Naive thymus-derived CD4-positive, alpha-beta T cell (primary cell): ENCODE measurements at regions of chr19 and their contacts with region 1.

Region 1: DNA sequence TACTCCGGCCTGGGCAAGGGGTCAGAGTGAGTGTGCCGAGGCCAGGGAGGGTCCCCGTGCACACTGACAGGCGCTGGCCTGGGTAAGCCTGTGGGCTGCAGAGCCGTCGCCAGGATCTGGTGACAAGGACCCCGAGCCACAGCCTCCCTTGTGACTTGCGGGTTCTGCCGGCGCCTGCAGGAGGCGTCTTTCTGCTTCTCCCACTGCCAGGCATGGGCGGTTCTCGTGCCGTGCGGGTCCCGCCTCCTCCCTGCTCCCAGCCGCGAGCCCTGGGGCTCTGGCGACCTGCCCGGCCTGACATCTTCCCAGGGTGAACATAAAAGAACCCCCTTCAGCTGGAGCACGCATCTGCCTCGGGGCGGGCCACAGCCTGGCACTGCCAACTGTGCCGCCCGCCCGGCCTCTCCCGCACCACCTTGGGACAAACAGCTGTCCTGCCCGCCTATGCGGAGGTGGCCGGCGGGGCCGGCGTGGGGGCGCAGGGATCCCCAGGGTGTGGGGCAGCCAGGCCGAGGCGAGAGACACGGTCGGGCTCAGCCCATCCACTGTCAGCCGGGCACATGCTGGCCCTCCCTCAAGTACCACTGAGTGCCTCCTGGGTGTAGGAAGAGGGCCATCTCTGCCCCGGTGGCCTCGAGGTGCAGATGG is 1.5 kb upstream of the HCN2 start:
- DNase-seq: peak; percentile 35 to 72 (median 57)
- ATAC-seq: peak; percentile 66
- H3K4me3 ChIP-seq: no peak overlapping the region
- H3K4me3 Mint-ChIP-seq: peak overlapping the region in 8 of 10 donors; percentile 28 to 76 (median 48)
- H3K27ac ChIP-seq: no peak overlapping the region
- H3K27ac Mint-ChIP-seq: no peak overlapping the region
- H3K4me1 ChIP-seq: peaks cover 10 to 12% of the 10 kb centered on the region in 2 donors
- H3K4me1 Mint-ChIP-seq: peaks cover 0 to 11% (median 4%) of the 10 kb centered on the region in 7 donors
- H3K27me3 ChIP-seq: peaks cover 0 to 10% of the 10 kb centered on the region in 2 donors
- H3K27me3 Mint-ChIP-seq: peaks cover 0 to 31% (median 8%) of the 10 kb centered on the region in 5 donors

Region 2: DNA sequence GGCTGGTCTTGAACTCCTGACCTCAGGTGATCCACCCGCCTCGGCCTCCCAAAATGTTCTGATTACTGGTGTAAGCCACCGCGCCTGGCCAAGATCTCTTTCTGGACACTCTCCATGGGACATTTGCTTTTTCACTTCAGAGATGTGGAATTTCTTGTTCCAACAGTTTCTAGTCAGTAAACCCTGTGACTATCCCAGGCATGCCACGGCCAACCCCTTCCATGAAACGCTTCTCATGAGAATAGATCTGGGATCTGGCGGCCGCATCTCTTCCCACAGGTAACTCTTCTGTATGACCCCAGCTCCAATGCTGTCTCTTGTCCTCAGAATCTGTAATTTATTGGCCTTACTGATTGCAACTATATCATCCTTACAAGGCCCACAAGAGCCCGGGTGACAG is 313.2 kb before region 1 on chr19:
- CTCF ChIA-PET with region 1: no interaction called
- POLR2A ChIA-PET with region 1: no interaction called
- intact Hi-C with region 1: no loop called
- DNase-seq: no peak
- ATAC-seq: no peak
- H3K4me3 ChIP-seq: no peak overlapping the region
- H3K4me3 Mint-ChIP-seq: no peak overlapping the region
- H3K27ac ChIP-seq: no peak overlapping the region
- H3K27ac Mint-ChIP-seq: no peak overlapping the region
- H3K4me1 ChIP-seq: no peaks in the 10 kb centered on the region
- H3K4me1 Mint-ChIP-seq: no peaks in the 10 kb centered on the region
- H3K27me3 ChIP-seq: peaks cover 0 to 5% of the 10 kb centered on the region in 2 donors
- H3K27me3 Mint-ChIP-seq: peaks cover 26 to 56% (median 44%) of the 10 kb centered on the region in 5 donors

Region 3: DNA sequence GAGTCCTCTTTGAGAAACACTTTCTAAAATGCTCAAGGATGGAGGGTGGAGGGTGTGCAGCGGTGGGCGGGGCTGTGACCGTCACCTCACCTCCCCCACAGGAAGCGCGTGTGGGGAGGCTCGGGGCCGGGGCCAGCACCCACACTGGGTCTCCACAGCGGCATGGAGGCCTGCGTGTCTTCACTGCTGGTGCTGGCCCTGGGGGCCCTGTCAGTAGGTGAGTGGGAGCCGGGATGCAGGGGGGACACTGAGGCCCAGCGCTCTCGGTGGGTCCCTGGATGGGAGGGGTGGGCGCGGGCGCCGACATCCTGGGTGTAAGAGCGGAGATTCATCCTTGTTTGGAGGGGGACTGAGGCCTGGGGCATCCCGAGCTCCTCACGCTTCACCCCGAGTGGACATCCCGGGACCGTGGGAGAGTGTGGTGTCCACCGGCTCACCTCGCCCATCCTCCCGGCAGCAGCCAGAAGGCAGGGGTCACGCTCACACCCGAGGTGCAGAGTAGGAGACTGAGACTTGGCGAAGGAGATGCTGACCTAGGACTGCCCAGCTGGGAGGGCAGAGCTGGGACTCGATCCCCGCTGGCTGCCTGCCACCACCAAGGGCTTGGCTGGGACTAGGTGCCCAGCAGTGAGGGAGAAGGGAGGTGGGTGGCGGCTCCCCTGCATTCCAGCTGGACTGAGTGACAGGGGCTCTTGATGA is 44.2 kb before region 1 on chr19 and contains the start of gene GZMM:
- CTCF ChIA-PET with region 1: no interaction called
- POLR2A ChIA-PET with region 1: no interaction called
- intact Hi-C with region 1: no loop called
- DNase-seq: peak; percentile 63 to 86 (median 82)
- ATAC-seq: peak; percentile 98
- H3K4me3 ChIP-seq: peak within 1 kb of the TSS; percentile 70
- H3K4me3 Mint-ChIP-seq: peak within 1 kb of the TSS; percentile 81 to 94 (median 90)
- H3K27ac ChIP-seq: peak within 1 kb of the TSS; percentile 88
- H3K27ac Mint-ChIP-seq: peak within 1 kb of the TSS; percentile 77 to 97 (median 91)
- H3K4me1 ChIP-seq: peaks cover 5 to 10% of the 10 kb centered on the region in 2 donors
- H3K4me1 Mint-ChIP-seq: peaks cover 4 to 24% (median 21%) of the 10 kb centered on the region in 7 donors
- H3K27me3 ChIP-seq: no peaks in the 10 kb centered on the region
- H3K27me3 Mint-ChIP-seq: no peaks in the 10 kb centered on the region
- total RNA-seq, gene GZMM: 30.0 to 81.4 (median 67.8) TPM

Region 4: DNA sequence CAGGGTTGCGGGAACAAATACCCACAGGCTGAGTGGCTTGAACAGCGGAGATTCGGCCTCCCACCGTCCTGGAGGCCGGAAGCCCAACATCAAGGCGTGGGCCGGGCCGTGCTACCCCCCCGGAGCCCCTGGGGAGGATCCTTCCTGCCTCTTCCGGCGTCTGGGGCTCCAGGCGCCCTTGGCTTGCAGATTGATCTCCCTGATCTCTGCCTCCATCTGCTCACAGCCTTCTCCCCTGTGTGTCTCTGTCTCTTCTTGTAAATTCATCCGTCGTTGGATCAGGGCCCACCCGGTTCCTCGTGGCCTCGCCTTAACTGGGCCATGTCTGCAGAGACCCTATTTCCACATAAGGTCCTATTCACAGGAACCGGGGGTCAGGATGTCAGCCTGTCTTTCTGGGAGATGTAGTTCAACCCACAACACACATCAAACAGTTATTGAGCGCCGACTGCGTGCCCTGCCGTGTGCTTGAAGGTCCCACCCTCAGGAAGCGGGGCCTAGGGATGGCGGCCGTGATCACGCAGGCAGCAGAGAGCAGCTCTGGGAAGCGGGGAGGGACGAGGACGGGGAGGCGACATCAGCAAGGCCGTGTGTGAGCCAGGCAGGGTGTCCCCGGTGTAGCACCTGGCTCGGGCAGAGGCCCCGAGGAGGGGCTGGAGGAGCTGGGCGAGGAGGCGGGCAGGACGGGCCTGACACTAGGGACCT is 22.7 kb after region 1 on chr19:
- CTCF ChIA-PET with region 1: no interaction called
- POLR2A ChIA-PET with region 1: interaction called, 3 read pairs
- intact Hi-C with region 1: loop called in 1 of 2 experiments (anchors 1 kb)
- DNase-seq: peak in 8 of 9 donors; percentile 55 to 75 (median 62)
- ATAC-seq: peak; percentile 72
- H3K4me3 ChIP-seq: peak overlapping the region; percentile 49
- H3K4me3 Mint-ChIP-seq: peak overlapping the region; percentile 83 to 97 (median 94)
- H3K27ac ChIP-seq: peak overlapping the region; percentile 75
- H3K27ac Mint-ChIP-seq: peak overlapping the region; percentile 81 to 98 (median 90)
- H3K4me1 ChIP-seq: peaks cover 12% of the 10 kb centered on the region in 2 donors
- H3K4me1 Mint-ChIP-seq: peaks cover 0 to 23% (median 17%) of the 10 kb centered on the region in 7 donors
- H3K27me3 ChIP-seq: no peaks in the 10 kb centered on the region
- H3K27me3 Mint-ChIP-seq: no peaks in the 10 kb centered on the region

Region 5: GRCh38 chr19:633068-633785 is 45.0 kb after region 1 on chr19 and contains the start of gene POLRMT:
- CTCF ChIA-PET with region 1: interaction called, 3 read pairs
- POLR2A ChIA-PET with region 1: no interaction called
- intact Hi-C with region 1: loop called (anchors 1 to 2 kb)
- DNase-seq: peak; percentile 87 to 99 (median 96)
- ATAC-seq: peak; percentile 99
- H3K4me3 ChIP-seq: peak within 1 kb of the TSS; percentile 91
- H3K4me3 Mint-ChIP-seq: peak within 1 kb of the TSS; percentile 92 to 99 (median 97)
- H3K27ac ChIP-seq: peak within 1 kb of the TSS; percentile 78
- H3K27ac Mint-ChIP-seq: peak within 1 kb of the TSS; percentile 89 to 97 (median 93)
- H3K4me1 ChIP-seq: peaks cover 6 to 13% of the 10 kb centered on the region in 2 donors
- H3K4me1 Mint-ChIP-seq: peaks cover 13 to 41% (median 24%) of the 10 kb centered on the region in 7 donors
- H3K27me3 ChIP-seq: no peaks in the 10 kb centered on the region
- H3K27me3 Mint-ChIP-seq: no peaks in the 10 kb centered on the region
- total RNA-seq, gene POLRMT: 61.2 to 105 (median 71.3) TPM

Region 6: DNA sequence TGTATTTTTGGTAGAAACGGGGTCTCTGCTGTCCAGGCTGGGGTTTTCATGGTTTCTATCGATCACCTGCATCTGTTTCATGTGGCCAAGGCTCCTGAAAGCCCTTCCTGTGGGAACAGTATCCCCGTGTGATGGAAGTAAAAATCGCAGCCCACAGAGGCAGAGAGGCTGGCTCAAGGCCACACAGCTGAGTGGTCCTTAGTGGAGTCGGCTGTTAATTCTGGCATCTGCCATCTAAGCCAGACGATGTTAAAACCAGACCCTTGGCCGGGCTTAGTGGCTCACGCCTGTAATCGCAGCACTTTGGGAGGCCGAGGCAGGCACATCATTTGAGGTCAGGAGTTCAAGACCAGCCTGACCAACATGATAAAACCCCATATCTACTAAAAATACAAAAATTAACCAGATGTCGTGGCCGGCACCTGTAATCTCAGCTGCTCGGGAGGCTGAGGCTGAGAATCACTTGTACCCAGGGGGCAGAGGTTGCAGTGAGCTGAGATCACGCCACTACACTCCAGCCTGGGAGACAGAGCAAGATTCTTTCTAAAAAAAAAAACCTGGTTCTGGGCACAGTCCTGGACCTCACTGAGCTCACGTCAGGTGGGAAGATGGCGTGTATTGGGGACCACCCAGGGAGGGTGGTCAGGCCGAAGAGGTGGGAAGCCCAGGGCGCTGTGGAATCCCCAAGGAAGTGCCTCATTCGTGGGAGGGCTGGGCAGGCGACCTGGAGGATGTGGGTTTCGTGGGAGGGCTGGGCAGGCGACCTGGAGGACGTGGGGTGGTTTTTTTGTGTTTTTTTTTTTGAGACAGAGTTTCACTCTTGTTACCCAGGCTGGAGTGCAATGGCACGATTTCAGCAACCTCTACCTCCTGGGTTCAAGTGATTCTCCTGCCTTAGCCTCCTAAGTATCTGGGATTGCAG is 144.2 kb after region 1 on chr19:
- CTCF ChIA-PET with region 1: interaction called, 14 read pairs
- POLR2A ChIA-PET with region 1: interaction called, 4 read pairs
- intact Hi-C with region 1: loop called (anchors 1 to 5 kb)
- DNase-seq: no peak
- ATAC-seq: no peak
- H3K4me3 ChIP-seq: no peak overlapping the region
- H3K4me3 Mint-ChIP-seq: no peak overlapping the region
- H3K27ac ChIP-seq: no peak overlapping the region
- H3K27ac Mint-ChIP-seq: no peak overlapping the region
- H3K4me1 ChIP-seq: no peaks in the 10 kb centered on the region
- H3K4me1 Mint-ChIP-seq: peaks cover 0 to 10% (median 5%) of the 10 kb centered on the region in 7 donors
- H3K27me3 ChIP-seq: no peaks in the 10 kb centered on the region
- H3K27me3 Mint-ChIP-seq: no peaks in the 10 kb centered on the region